GM10248 (cell line): ENCODE measurements at regions of chr10 and their contacts with region 1.

Region 1: GRCh38 chr10:103333925-103334520 is 16.9 kb downstream of the PCGF6 start:
- DNase-seq: peak; percentile 35
- CTCF ChIP-seq: peak; percentile 54

Region 2: DNA sequence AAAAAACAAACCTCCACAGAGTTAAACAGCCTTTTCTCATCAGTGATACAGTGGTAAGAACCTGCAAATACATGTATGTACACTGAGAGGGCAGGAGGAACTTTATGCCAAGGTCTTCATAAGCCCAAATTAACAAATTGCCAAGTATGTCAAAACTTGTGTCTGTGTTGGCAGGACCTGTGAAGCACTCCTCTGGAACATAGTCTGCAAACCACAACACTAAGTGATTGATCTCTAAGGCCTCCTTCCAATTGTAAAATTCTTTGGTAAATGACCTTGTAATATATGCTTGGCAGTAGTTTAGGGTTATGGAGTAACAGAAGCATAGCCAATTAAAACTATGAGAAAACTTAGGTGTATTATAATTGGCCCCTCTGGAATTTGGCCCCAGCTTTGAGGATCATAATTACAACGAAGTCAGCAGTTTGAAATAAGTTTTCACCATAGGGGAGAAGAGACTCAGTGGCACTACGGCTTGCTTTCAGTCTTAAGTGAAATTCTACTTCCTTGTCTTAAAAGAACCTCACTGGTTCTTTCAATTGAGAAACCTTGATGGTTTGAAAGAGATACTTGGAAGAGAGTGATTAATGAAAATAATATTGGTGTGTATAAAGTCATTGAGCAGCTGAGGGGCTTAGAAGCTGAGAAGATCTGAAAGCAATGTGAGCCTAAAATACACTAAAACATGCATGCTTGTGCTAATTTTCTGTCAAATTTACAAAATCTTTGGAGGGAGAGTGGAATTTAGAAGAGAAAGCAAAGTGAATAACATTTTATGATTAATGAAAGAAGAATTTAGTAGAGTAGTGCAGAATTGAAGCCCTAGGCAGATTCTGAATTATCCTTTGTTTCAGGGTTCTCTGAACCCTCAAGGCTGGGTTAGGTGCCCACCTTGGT is 358.3 kb before region 1 on chr10:
- CTCF ChIA-PET with region 1: no interaction called
- POLR2A ChIA-PET with region 1: no interaction called
- DNase-seq: no peak
- CTCF ChIP-seq: no peak

Region 3: GRCh38 chr10:103350501-103351260 is 16.7 kb after region 1 on chr10 and contains the start of gene PCGF6:
- CTCF ChIA-PET with region 1: interaction called, 12 read pairs
- POLR2A ChIA-PET with region 1: no interaction called
- DNase-seq: peak; percentile 95
- CTCF ChIP-seq: no peak